ENCODE measurements at regions of chr7 and their contacts with region 1.

Region 1: GRCh38 chr7:50304158-50304910 is at the start of gene IKZF1:
- DNase-seq: peak; percentile 87
- H3K4me3 Mint-ChIP-seq: peak within 1 kb of the TSS; percentile 95
- H3K27ac Mint-ChIP-seq: peak within 1 kb of the TSS; percentile 97
- H3K4me1 Mint-ChIP-seq: peaks cover 39% of the 10 kb centered on the region
- H3K27me3 Mint-ChIP-seq: peaks cover 4% of the 10 kb centered on the region
- total RNA-seq, gene IKZF1: 282 and 292 TPM in 2 replicates

Region 2: DNA sequence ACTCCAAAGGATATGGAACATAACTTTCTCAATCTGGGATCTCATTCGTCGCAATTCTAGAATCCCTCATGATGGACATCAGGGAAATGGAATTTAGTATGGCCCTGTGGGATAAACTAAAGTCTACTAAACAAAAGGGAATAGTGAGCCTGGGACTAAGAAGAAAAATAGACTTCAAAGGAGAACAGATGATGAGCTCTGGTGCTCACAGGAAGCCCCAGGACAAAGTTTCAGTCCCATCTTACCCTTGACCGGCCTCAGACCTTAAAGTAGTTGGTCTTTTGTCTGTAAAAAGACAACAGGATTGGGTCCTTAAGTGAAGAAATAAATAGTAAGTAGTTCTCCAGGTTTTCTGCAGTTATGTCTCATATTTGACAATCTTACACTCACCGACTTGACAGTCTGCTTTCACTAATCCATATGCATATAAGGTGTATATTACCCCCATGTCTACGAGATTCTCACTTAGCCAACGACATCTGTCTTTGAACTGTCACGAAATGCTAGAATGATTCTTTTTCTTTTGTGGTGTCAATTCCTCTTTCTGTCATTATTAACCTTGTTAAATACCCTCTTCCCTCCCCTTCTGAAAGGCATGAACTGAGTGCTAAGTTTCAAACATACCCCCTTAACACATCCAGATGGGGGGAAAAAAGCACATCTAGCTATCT is 10.7 kb before region 1 on chr7:
- intact Hi-C with region 1: loop called (anchors 1 kb)
- DNase-seq: peak; percentile 45
- H3K4me3 Mint-ChIP-seq: no peak overlapping the region
- H3K27ac Mint-ChIP-seq: no peak overlapping the region
- H3K4me1 Mint-ChIP-seq: peaks cover 25% of the 10 kb centered on the region
- H3K27me3 Mint-ChIP-seq: peaks cover 4% of the 10 kb centered on the region

Region 3: DNA sequence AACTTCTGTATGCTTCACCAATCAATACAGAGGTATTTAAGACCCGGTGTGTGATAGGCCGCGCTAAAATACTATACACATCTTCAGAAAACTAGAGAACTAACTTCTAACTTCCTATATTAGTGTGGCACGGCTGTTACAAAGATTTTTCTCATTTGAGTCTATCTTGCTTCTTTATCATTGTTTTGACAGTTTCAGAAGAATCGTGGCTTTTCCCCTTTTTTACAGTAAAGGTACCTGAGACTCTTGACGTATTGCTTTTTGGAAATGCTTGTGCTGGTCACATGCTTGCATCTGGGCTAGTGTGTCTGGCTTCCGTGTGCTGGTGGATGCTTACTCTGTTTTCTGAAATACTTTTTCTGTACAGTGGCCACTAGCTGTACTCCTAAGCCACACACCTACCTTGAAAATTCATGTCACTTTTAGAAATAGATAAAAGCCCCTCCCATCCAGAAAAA is 12.9 kb after region 1 on chr7:
- intact Hi-C with region 1: loop called (anchors 1 kb)
- DNase-seq: peak; percentile 87
- H3K4me3 Mint-ChIP-seq: peak overlapping the region; percentile 79
- H3K27ac Mint-ChIP-seq: peak overlapping the region; percentile 88
- H3K4me1 Mint-ChIP-seq: peaks cover 87% of the 10 kb centered on the region
- H3K27me3 Mint-ChIP-seq: no peaks in the 10 kb centered on the region

Region 4: GRCh38 chr7:50335795-50336754 is 31.7 kb after region 1 on chr7:
- intact Hi-C with region 1: loop called (anchors 1 kb)
- DNase-seq: peak; percentile 92
- H3K4me3 Mint-ChIP-seq: no peak overlapping the region
- H3K27ac Mint-ChIP-seq: no peak overlapping the region
- H3K4me1 Mint-ChIP-seq: peaks cover 63% of the 10 kb centered on the region
- H3K27me3 Mint-ChIP-seq: no peaks in the 10 kb centered on the region

Region 5: GRCh38 chr7:50349963-50350944 is 45.9 kb after region 1 on chr7:
- intact Hi-C with region 1: loop called (anchors 1 kb)
- DNase-seq: peak; percentile 92
- H3K4me3 Mint-ChIP-seq: peak overlapping the region; percentile 76
- H3K27ac Mint-ChIP-seq: peak overlapping the region; percentile 95
- H3K4me1 Mint-ChIP-seq: peaks cover 95% of the 10 kb centered on the region
- H3K27me3 Mint-ChIP-seq: no peaks in the 10 kb centered on the region

Region 6: GRCh38 chr7:50369143-50370026 is 65.1 kb after region 1 on chr7:
- intact Hi-C with region 1: loop called (anchors 1 kb)
- DNase-seq: peak; percentile 87
- H3K4me3 Mint-ChIP-seq: peak overlapping the region; percentile 55
- H3K27ac Mint-ChIP-seq: peak overlapping the region; percentile 45
- H3K4me1 Mint-ChIP-seq: peaks cover 85% of the 10 kb centered on the region
- H3K27me3 Mint-ChIP-seq: no peaks in the 10 kb centered on the region

Region 7: GRCh38 chr7:51000956-51001355 is 696.6 kb after region 1 on chr7:
- intact Hi-C with region 1: no loop called
- DNase-seq: peak; percentile 36
- H3K4me3 Mint-ChIP-seq: no peak overlapping the region
- H3K27ac Mint-ChIP-seq: no peak overlapping the region
- H3K4me1 Mint-ChIP-seq: no peaks in the 10 kb centered on the region
- H3K27me3 Mint-ChIP-seq: peaks cover 6% of the 10 kb centered on the region

Measured in activated CD4-positive, alpha-beta T cell treated with anti-CD3 and anti-CD28 coated beads, Interleukin-2, amount 10 ng/mL, durations not matched to agents 24 days and 14 days (primary cell).